PC-9 (cell line): ENCODE measurements at regions of chr22 and their contacts with region 1.

Region 1: GRCh38 chr22:29625090-29625825 is 21.8 kb downstream of the NF2 start:
- DNase-seq: peak; percentile 37 to 75
- H3K4me3 ChIP-seq: no peak overlapping the region
- H3K27ac ChIP-seq: peak overlapping the region; percentile 87
- H3K4me1 ChIP-seq: peaks cover 75% of the 10 kb centered on the region
- H3K27me3 ChIP-seq: no peaks in the 10 kb centered on the region
- CTCF ChIP-seq: peak; percentile 87

Region 2: DNA sequence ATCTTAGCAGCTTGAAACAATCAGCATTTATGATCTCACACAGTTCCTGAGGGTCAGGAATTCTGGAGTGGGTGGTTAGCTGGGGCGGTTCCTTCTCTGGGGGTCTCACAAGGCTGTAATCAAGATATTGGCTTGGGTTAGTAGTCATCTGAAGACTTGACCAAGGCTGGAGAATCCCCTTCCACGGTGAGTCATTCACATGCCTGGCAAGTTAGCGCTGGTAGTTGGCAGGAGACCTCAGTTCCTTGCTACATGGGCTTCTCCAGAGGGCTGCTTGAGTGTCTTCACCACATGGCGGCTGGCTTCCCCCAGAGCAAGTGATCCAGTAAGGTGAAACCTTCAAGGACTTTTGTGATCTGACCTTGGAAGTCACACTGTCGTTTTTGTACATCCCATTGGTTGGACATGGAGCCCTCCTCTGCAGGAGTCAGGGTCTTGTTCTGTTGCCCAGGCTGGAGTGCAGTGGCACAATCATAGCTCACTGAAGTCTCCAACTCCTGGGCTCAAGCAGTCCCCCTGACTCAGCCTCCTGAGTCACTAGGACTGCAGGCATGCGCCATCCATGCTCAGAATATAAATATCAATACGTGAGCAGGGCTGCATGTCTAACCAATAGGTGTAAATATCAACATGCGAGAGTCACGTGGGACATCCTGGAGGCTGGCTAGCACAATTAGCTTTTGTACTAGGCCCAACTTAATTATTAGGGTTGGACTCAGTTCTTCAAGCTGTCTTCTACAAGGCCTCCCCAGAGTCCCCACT is 37.1 kb before region 1 on chr22:
- CTCF ChIA-PET with region 1: no interaction called
- POLR2A ChIA-PET with region 1: no interaction called
- intact Hi-C with region 1: loop called (anchors 1 kb)
- DNase-seq: peak in 1 of 2 experiments; percentile 77
- H3K4me3 ChIP-seq: no peak overlapping the region
- H3K27ac ChIP-seq: no peak overlapping the region
- H3K4me1 ChIP-seq: peaks cover 9% of the 10 kb centered on the region; the same call in 1 of the 2 replicates
- H3K27me3 ChIP-seq: no peaks in the 10 kb centered on the region
- CTCF ChIP-seq: no peak

Region 3: DNA sequence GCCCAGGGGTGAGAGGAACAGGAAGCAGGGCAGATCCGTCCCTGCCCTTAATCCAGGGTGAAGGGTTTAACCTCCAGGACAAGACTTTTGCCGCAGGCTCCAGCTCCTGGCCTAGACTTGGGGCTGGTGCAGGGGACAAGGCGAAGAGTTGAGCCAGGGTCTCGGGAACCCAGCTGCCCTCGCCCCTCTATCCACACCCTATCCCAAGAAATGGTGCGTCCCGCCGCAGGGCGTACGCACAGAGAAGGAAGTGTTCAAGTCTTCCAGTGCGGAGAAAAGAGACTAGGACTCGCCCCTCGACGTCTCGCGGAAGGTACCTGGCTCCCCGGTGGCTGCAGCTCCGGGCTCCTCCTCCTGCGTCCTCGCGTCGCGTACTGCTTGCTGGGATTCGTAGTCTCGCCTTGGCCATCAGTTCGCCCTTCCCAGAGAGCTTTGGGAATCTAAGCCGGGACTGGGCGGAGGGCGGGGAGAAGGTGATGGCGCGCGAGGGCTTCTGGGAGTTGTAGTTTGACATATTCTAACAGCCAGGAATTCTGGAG is 141.4 kb after region 1 on chr22 and contains the start of gene ZMAT5:
- CTCF ChIA-PET with region 1: no interaction called
- POLR2A ChIA-PET with region 1: no interaction called
- intact Hi-C with region 1: loop called (anchors 10 kb)
- DNase-seq: peak; percentile 91 to 94
- H3K4me3 ChIP-seq: peak within 1 kb of the TSS; percentile 93
- H3K27ac ChIP-seq: peak within 1 kb of the TSS; percentile 76
- H3K4me1 ChIP-seq: peaks cover 30% of the 10 kb centered on the region
- H3K27me3 ChIP-seq: no peaks in the 10 kb centered on the region
- CTCF ChIP-seq: no peak
- total RNA-seq, gene ZMAT5: 14.2 and 15.5 TPM in 2 replicates

Region 4: DNA sequence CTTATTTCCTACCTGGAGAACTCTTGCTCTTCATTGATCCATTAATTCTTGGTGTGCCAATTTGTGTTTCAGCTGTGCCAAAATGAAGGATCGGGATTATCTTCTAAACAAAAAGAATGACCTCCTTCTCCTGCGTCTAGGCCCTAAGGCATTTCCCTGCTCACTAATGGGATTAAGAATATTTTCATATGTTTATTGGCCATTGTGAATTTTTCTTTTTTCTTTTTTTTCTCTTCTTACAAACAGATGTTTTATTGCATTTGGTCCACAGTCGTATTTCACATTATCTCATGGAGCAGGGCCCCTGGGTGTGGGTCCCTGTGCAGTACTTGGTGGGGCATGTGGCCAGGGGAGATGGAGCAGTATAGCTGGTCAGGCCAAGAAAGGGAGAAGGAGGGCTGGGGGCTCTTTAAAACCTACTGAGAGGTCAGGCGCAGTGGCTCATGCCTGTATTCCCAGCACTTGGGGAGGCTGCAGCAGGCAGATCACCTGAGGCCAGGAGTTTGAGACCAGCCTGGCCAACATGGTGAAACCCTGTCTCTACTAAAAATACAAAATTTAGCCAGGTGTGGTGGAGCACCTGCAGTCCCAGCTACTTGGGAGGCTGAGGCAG is 419.7 kb after region 1 on chr22:
- CTCF ChIA-PET with region 1: interaction called, 10 read pairs
- POLR2A ChIA-PET with region 1: no interaction called
- intact Hi-C with region 1: no loop called
- DNase-seq: no peak
- H3K4me3 ChIP-seq: no peak overlapping the region
- H3K27ac ChIP-seq: peak overlapping the region; percentile 56
- H3K4me1 ChIP-seq: peaks cover 32% of the 10 kb centered on the region
- H3K27me3 ChIP-seq: no peaks in the 10 kb centered on the region
- CTCF ChIP-seq: no peak

Region 5: GRCh38 chr22:30205281-30206115 is 580.2 kb after region 1 on chr22:
- CTCF ChIA-PET with region 1: no interaction called
- POLR2A ChIA-PET with region 1: no interaction called
- intact Hi-C with region 1: loop called (anchors 5 kb)
- DNase-seq: peak in 1 of 2 experiments; percentile 91
- H3K4me3 ChIP-seq: peak overlapping the region; percentile 27; the same call in 1 of the 2 replicates
- H3K27ac ChIP-seq: peak overlapping the region; percentile 98
- H3K4me1 ChIP-seq: peaks cover 88% of the 10 kb centered on the region
- H3K27me3 ChIP-seq: no peaks in the 10 kb centered on the region
- CTCF ChIP-seq: no peak